Mammary epithelial cell (primary cell): ENCODE measurements at regions of chr5 and their contacts with region 1.

Region 1: GRCh38 chr5:140372971-140373487 is 13.0 kb downstream of the SLC4A9 start:
- DNase-seq: peak; percentile 56
- H3K4me3 ChIP-seq: no peak overlapping the region
- H3K27ac ChIP-seq: no peak overlapping the region
- H3K4me1 ChIP-seq: no peaks in the 10 kb centered on the region
- H3K27me3 ChIP-seq: no peaks in the 10 kb centered on the region
- CTCF ChIP-seq: peak; percentile 66 to 86

Region 2: DNA sequence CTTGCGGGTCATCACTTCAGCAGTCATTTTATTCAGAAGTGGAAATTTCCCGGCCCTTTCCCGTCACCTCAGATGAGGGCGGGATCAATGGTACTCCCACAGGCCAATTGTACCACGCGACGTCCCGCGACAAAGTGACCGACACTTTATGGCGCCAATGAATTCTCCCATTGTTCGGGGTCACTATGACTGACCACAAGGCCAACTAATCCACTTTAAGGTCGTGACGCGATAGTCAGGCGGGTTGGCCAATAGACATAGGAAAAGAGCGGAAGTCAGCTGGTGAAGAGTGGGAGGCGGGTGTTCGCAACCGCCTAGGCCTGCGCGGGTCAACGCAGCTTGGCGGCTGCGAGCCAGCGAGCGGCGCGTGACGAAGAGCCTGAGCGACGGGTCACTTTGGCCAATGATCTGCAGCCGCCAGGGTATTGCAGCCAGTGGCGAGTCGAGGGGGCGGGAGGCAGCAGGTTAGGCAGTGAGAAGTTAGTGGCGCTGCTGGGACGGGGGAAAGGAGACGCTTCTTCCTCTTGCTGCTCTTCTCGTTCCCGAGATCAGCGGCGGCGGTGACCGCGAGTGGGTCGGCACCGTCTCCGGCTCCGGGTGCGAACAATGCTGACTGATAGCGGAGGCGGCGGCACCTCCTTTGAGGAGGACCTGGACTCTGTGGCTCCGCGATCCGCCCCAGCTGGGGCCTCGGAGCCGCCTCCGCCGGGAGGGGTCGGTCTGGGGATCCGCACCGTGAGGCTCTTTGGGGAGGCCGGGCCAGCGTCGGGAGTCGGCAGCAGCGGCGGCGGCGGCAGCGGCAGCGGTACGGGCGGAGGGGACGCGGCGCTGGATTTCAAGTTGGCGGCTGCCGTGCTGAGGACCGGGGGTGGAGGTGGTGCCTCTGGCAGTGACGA is 28.6 kb after region 1 on chr5 and contains the start of gene ANKHD1:
- CTCF ChIA-PET with region 1: no interaction called
- dilution Hi-C with region 1: no loop called
- in situ Hi-C with region 1: no loop called
- intact Hi-C with region 1: loop called (anchors 1 kb)
- DNase-seq: peak; percentile 100
- H3K4me3 ChIP-seq: peak within 1 kb of the TSS; percentile 93 to 99 (median 95)
- H3K27ac ChIP-seq: peak within 1 kb of the TSS; percentile 89
- H3K4me1 ChIP-seq: peaks cover 30% of the 10 kb centered on the region
- H3K27me3 ChIP-seq: no peaks in the 10 kb centered on the region
- CTCF ChIP-seq: no peak
- total RNA-seq, gene ANKHD1: 61.2 to 83.3 TPM

Region 3: GRCh38 chr5:140432916-140433315 is 59.9 kb after region 1 on chr5:
- CTCF ChIA-PET with region 1: no interaction called
- dilution Hi-C with region 1: no loop called
- in situ Hi-C with region 1: no loop called
- intact Hi-C with region 1: loop called (anchors 10 kb)
- DNase-seq: no peak
- H3K4me3 ChIP-seq: no peak overlapping the region
- H3K27ac ChIP-seq: no peak overlapping the region
- H3K4me1 ChIP-seq: no peaks in the 10 kb centered on the region
- H3K27me3 ChIP-seq: no peaks in the 10 kb centered on the region
- CTCF ChIP-seq: no peak

Region 4: GRCh38 chr5:140468188-140468587 is 95.2 kb after region 1 on chr5:
- CTCF ChIA-PET with region 1: no interaction called
- dilution Hi-C with region 1: loop called (anchors 5 kb)
- in situ Hi-C with region 1: no loop called
- intact Hi-C with region 1: loop called (anchors 5 kb)
- DNase-seq: no peak
- H3K4me3 ChIP-seq: no peak overlapping the region
- H3K27ac ChIP-seq: no peak overlapping the region
- H3K4me1 ChIP-seq: no peaks in the 10 kb centered on the region
- H3K27me3 ChIP-seq: no peaks in the 10 kb centered on the region
- CTCF ChIP-seq: no peak

Region 5: DNA sequence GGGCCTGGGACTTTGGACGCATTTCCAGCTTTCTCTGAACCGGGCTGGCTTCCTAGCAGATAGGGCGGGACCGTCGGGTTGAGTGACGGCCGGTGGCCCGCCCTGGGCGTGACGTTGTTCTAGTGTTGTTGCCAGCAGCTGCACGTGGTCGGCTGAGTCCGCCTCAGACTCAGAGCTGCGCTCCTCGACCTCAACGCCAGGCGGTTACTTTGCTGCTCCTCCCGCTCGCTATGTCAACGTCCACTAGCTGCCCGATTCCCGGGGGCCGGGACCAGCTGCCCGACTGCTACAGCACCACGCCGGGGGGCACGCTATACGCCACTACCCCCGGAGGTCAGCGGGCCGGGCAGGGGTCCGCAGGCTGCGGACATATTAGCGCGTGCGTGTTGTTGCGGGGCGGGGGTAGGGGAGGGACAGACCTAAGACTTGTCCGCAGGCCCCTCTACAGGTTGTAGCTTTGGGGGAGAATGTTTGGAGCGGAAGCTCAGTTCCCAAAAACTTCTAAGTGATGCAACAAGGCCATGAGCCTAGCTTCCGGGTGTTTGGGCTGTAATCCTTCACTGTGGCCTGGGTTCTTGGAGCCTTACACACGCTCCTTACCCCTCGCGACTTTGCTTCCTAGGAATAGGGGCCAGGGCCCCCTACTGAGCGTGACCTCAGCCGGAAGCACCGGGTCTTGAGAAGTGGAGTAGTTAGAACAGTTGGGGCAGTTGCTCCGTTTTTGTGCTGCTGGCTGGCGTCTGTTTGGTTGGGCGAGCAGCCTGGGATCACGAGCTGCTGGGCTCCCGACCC is 174.7 kb after region 1 on chr5 and contains the start of gene EIF4EBP3:
- CTCF ChIA-PET with region 1: no interaction called
- dilution Hi-C with region 1: no loop called
- in situ Hi-C with region 1: no loop called
- intact Hi-C with region 1: loop called (anchors 2 kb)
- DNase-seq: peak; percentile 87
- H3K4me3 ChIP-seq: peak within 1 kb of the TSS in 2 of 3 experiments; percentile 34 to 55
- H3K27ac ChIP-seq: no peak within 1 kb of the TSS
- H3K4me1 ChIP-seq: peaks cover 13% of the 10 kb centered on the region
- H3K27me3 ChIP-seq: no peaks in the 10 kb centered on the region
- CTCF ChIP-seq: peak; percentile 51 to 69
- total RNA-seq, gene EIF4EBP3: 1.8 to 6.0 TPM

Region 6: DNA sequence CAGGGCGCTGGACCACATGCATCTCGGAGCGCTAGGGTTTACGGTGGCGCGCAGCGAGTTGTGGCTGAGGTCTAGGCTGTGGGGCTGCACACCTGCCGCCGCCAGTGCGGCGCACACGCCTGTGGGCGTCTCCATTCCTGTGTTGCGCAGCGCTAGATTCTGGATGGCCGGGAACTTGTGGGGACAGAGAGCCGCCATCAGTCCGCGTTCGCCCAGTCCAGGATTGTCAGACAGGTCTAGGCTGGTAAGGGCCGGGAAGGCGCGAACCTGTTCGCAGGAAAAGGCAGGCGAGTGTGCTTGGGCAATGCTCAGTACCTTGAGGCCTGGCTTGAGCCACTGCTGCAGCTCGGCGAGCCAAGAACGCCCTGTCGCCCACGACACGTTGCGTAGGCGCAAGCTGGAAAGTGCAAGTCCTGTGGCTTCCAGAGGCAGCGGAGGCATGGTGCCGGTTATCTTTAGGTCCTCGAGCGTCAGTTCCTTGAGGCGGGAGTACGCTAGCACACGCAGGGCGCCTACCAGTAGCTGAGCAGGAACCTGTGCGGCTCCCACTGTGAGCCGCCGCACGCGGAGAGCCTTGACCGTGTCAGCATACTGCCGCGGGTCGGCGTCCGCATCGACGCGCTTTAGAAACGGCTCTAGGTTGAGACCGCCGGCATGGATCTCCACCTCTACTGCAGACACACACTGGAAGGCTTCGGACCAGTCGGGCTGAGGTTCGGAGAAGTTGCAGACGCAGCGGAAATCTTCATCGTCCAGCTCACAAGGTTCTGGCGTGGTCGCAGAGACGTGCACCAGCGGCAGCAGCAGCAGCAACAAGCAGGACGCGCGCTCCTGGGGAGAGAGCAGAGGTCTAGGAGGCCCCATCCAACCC is 259.4 kb after region 1 on chr5:
- CTCF ChIA-PET with region 1: no interaction called
- dilution Hi-C with region 1: no loop called
- in situ Hi-C with region 1: no loop called
- intact Hi-C with region 1: loop called (anchors 2 kb)
- DNase-seq: peak; percentile 62
- H3K4me3 ChIP-seq: peak overlapping the region; percentile 4 to 44 (median 40)
- H3K27ac ChIP-seq: no peak overlapping the region
- H3K4me1 ChIP-seq: peaks cover 28% of the 10 kb centered on the region
- H3K27me3 ChIP-seq: no peaks in the 10 kb centered on the region
- CTCF ChIP-seq: peak in 1 of 2 donors; percentile 4

Region 7: DNA sequence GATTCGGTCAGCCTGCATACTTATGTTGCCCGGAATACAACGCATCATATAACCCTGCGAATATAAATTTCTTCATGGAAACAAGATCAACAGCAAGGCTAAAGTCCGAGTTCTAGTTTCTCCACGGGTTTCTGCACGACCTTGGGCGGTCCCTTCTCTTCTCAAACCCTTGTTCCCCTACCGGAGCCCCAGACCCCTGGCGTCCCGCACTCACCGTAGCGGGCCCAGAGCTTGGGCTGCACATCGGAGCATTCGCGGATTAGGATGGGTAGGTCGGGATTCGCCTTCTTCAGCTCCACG is 274.0 kb after region 1 on chr5:
- CTCF ChIA-PET with region 1: no interaction called
- dilution Hi-C with region 1: no loop called
- in situ Hi-C with region 1: no loop called
- intact Hi-C with region 1: loop called (anchors 1 kb)
- DNase-seq: no peak
- H3K4me3 ChIP-seq: peak overlapping the region; percentile 81 to 88 (median 81)
- H3K27ac ChIP-seq: peak overlapping the region; percentile 75
- H3K4me1 ChIP-seq: peaks cover 15% of the 10 kb centered on the region
- H3K27me3 ChIP-seq: no peaks in the 10 kb centered on the region
- CTCF ChIP-seq: no peak